Right lobe of liver (tissue), 6 donors: ENCODE measurements at regions of chr7 and their contacts with region 1.

Region 1: GRCh38 chr7:16695621-16696237 is 49.7 kb downstream of the BZW2 start:
- DNase-seq: no peak
- ATAC-seq: peak; percentile 86 to 91 (median 89)
- H3K4me3 ChIP-seq: no peak overlapping the region
- H3K27ac ChIP-seq: no peak overlapping the region
- H3K4me1 ChIP-seq: no peaks in the 10 kb centered on the region
- H3K27me3 ChIP-seq: no peaks in the 10 kb centered on the region
- CTCF ChIP-seq: peak; percentile 53 to 66 (median 58)
- POLR2A ChIP-seq: no peak

Region 2: DNA sequence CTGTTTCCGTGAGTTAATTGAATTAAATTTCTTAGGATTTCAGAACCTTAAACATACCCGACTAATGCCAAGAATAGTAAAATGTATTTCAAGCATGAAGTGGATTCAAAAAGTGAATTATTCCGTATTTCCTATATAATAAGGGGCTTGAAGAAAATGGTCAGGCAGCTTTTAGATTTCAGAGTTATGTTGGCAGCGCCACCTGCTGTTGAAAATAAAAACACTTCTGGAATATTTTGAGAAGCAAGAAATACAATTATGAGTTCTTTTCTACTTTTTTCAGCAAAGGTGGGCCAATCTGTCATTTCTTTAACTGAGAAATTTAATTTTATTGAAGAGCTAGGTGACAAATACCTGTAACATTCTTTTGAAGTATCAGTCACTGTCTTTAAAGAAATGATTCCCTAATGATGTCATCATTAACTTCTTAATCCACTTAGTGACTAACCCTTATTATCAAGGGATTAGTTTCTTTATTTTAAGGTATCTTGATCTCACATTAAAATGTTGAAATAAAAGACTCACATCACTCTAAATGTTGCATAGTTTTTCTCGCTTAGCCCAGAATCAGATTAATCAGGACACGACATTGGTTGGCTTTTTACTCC is 222.7 kb after region 1 on chr7:
- intact Hi-C with region 1: loop called in 1 of 2 experiments (anchors 5 kb)
- DNase-seq: no peak
- ATAC-seq: peak in 1 of 4 donors; percentile 24
- H3K4me3 ChIP-seq: no peak overlapping the region
- H3K27ac ChIP-seq: no peak overlapping the region
- H3K4me1 ChIP-seq: peaks cover 0 to 7% (median 0%) of the 10 kb centered on the region in 4 donors
- H3K27me3 ChIP-seq: no peaks in the 10 kb centered on the region
- CTCF ChIP-seq: peak; percentile 69 to 77 (median 75)
- POLR2A ChIP-seq: no peak